ENCODE measurements at regions of chr1 and their contacts with region 1.

Region 1: GRCh38 chr1:203410182-203410933 is 59.4 kb upstream of the FMOD start:
- DNase-seq: no peak
- H3K4me3 Mint-ChIP-seq: no peak overlapping the region
- H3K27ac Mint-ChIP-seq: no peak overlapping the region
- H3K4me1 Mint-ChIP-seq: no peaks in the 10 kb centered on the region
- H3K27me3 Mint-ChIP-seq: peaks cover 34% of the 10 kb centered on the region

Region 2: DNA sequence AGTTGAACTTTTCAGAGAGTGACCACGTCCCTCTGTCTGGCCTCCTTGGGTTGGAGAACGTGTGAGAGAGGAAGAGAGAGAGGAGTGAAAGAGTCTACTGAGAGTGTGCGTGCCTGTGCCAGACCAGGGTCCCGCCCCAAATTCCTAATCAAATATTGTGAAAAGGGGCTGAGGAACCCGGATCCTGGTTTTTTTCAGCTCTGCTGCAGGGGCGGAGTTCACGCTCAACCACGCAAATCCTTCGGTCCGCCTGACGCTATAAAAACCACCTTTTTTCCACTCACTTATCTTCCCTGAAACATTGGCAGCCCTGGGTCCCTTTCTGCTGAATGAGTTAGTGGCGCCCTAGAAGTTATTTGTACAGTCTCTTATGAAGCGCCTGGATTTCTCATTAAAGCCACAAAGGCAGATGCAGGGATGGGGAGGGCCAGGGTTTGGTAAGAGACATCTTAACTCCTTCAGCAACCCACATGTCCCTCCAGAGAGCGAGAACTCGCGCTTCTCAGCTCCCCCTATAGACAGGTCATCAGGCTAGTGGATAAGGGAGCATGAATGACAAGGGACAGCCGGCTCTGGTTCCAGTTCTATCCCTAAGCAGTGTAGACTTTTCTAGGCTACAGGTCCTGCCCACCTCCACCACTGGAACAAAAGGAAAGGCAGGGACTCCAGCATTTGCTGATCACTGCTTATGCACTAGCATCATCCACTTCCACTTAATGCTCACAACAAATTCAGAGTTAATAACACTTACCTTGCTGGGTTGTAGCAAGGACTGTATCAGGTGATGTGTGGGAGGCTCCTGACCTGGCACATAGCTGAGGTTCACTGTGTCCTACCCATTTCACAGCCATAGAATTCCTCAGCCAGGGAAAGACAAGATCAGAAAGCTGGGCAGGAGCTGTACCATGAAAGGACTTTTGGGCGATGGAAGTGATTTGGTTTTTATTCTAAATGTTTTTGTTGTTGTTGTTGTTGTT is 59.0 kb before region 1 on chr1 and contains the start of gene FMOD:
- intact Hi-C with region 1: loop called (anchors 5 kb)
- DNase-seq: no peak
- H3K4me3 Mint-ChIP-seq: no peak within 1 kb of the TSS
- H3K27ac Mint-ChIP-seq: peak within 1 kb of the TSS; percentile 61
- H3K4me1 Mint-ChIP-seq: peaks cover 6% of the 10 kb centered on the region
- H3K27me3 Mint-ChIP-seq: peaks cover 18% of the 10 kb centered on the region
- total RNA-seq, gene FMOD: 1.4 and 1.9 TPM in 2 replicates